K562 (cell line): ENCODE measurements at regions of chr14 and their contacts with region 1.

Region 1: DNA sequence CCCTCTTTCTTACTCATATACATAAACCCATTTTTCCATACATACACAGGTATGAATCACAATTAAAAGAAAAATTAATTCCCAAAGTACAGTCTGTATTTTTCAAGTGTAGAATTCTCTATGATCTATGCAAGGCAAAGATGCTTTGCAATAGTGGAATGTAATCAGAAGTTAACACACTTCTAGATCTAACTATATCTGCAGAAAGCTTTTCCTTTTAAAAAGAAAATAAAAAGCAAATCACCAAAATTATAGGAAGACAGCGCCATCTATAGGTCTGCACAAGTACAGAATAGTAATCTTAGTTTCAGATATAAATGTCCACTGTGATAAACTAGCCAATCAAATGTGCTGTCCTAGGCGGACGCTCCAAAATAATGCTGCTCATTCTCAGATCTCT is 22.0 kb downstream of the SLC25A21 start:
- DNase-seq: peak in 2 of 4 experiments; percentile 46 to 47
- ATAC-seq: peak; percentile 69
- H3K4me3 ChIP-seq: no peak overlapping the region
- H3K27ac ChIP-seq: no peak overlapping the region
- H3K4me1 ChIP-seq: peaks cover 5 to 8% of the 10 kb centered on the region in 2 experiments; a peak in 3 of 5 replicates
- H3K27me3 ChIP-seq: no peaks in the 10 kb centered on the region
- CTCF ChIP-seq: peak; percentile 43 to 71 (median 52); a peak in 4 of 6 replicates
- EP300 ChIP-seq: no peak
- POLR2A ChIP-seq: no peak
- RAD21 ChIP-seq: peak in 1 of 2 experiments; percentile 64; a peak in 3 of 4 replicates

Region 2: DNA sequence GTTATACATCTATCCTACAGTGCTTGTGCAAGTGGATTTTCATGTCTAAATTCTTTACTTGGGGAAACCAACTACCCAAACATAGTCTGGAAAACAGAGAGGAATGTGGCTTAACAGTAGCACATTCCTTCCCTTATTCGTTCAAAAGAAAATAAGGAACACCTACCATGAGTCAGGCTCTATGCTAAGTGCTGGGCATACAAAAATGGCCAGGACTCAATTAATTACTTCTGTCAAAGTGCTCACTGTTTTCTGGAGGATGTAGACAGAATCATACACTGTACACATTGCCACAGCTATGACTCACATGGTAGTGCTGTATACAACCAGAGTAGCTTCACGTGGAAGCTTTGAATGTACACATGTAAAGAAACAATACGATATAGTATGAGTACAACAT is 28.2 kb before region 1 on chr14:
- CTCF ChIA-PET with region 1: no interaction called
- POLR2A ChIA-PET with region 1: no interaction called
- in situ Hi-C with region 1: no loop called
- intact Hi-C with region 1: no loop called
- DNase-seq: peak in 1 of 4 experiments; percentile 7
- ATAC-seq: peak; percentile 62; the same call in 2 of the 3 replicates
- H3K4me3 ChIP-seq: no peak overlapping the region
- H3K27ac ChIP-seq: no peak overlapping the region
- H3K4me1 ChIP-seq: no peaks in the 10 kb centered on the region
- H3K27me3 ChIP-seq: no peaks in the 10 kb centered on the region
- CTCF ChIP-seq: no peak
- EP300 ChIP-seq: no peak
- POLR2A ChIP-seq: no peak
- RAD21 ChIP-seq: no peak

Region 3: DNA sequence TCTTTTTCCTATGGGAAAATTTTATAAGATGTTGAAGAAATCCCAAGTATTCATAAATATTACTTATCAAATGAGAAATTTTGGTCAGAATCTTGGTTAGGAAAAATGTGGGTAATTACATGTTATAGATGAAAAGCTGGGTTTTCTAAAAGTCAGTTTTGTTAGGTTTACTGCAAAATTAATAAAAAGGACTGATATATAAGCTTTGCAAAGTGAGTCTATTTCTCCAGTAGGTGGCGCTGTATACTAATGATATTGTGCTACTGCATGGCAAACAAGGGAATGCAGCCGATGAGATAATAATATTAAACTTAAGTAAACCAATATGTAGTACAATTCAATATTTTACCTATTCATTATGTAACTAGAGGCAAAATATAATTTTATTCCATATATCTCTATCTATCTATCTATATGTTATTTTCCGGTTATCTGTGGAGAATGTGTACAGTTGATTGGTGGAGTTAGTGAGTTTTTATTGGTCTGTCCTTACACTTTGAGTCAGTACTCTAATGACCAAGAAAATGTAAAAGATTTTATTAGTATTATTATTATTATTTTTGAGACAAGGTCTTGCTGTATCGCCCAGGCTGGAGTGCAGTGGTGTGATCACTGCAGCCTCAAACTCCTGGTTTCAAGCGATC is 80.3 kb after region 1 on chr14:
- CTCF ChIA-PET with region 1: interaction called, 3 read pairs
- POLR2A ChIA-PET with region 1: no interaction called
- in situ Hi-C with region 1: no loop called
- intact Hi-C with region 1: loop called (anchors 2 kb)
- DNase-seq: peak; percentile 31 to 65 (median 40)
- ATAC-seq: peak; percentile 78
- H3K4me3 ChIP-seq: no peak overlapping the region
- H3K27ac ChIP-seq: no peak overlapping the region
- H3K4me1 ChIP-seq: no peaks in the 10 kb centered on the region
- H3K27me3 ChIP-seq: no peaks in the 10 kb centered on the region
- CTCF ChIP-seq: peak; percentile 38 to 63 (median 44); a peak in 3 of 6 replicates
- EP300 ChIP-seq: no peak
- POLR2A ChIP-seq: no peak
- RAD21 ChIP-seq: peak; percentile 13 to 40; a peak in 2 of 4 replicates